ENCODE measurements at regions of chr4 and their contacts with region 1.

Region 1: DNA sequence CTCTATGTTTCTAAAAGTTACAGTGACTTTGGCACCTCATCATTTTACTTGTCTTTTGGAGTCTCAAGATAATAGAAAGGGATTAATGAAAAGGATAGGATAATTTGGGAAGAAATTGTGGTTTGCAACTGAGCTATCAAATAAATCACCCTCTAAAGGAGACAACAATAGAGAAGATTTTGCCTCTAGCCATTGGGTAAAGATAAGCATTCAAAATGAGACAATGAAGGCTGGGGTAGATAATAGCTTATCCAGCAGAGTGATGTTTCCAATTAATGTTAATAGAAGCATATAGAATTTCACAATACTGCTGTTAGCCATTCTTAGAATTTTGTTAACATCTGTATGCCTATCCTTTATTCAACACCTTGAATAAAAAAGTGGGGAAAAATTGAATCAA is 1177.6 kb downstream of the ADGRL3 start:
- DNase-seq: no peak

Region 2: DNA sequence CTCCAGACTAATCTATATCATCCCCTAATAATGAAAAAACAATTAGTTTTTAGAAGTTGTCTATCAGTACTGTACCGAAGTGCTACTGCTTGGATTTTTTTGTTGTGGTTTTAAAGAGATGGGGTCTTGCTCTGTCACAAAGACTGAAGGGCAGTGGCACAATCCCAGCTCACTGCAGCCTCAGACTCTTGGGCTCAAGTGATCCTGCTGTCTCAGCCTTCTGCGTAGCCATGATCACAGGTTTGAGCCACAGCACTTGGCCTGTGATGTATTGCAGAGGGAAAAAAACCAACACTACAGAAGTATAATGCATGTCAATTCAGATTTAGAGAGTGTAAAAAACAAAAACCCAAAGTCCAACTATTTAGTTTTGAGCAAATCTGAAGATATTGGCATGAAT is 302.6 kb before region 1 on chr4:
- intact Hi-C with region 1: no loop called
- DNase-seq: no peak

Region 3: GRCh38 chr4:62301500-62301899 is 76.2 kb before region 1 on chr4:
- intact Hi-C with region 1: no loop called
- DNase-seq: no peak

Region 4: GRCh38 chr4:62387808-62388207 is 10.1 kb after region 1 on chr4:
- intact Hi-C with region 1: no loop called
- DNase-seq: no peak

Region 5: GRCh38 chr4:62415256-62415655 is 37.6 kb after region 1 on chr4:
- intact Hi-C with region 1: loop called in 1 of 2 experiments (anchors 2 kb)
- DNase-seq: no peak

Region 6: DNA sequence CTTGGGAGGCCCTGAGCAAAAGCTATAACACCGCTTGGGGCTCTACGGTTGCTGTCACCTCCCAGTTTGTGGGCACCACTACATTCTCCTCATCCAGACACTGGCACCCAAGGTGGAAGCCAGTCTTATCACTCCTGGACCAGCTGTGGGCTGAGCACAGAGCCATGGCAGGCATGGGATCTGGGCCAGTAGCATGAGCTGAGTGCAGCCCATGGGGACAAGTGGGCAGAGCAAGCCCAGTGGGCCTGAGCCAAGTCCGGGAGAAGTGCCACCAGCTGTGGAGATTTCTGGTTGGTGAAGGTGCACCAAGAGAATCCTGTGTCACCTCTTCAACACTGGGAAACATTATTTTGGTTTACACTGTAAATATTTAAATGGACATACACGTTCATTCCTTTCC is 1018.6 kb after region 1 on chr4:
- intact Hi-C with region 1: no loop called
- DNase-seq: peak; percentile 31